Activated naive CD4-positive, alpha-beta T cell treated with anti-CD3 and anti-CD28 coated beads for 36 hours (primary cell): ENCODE measurements at regions of chr7 and their contacts with region 1.

Region 1: GRCh38 chr7:23347682-23348180 is 48.6 kb downstream of the MALSU1 start:
- DNase-seq: peak; percentile 20
- H3K4me3 Mint-ChIP-seq: peak overlapping the region; percentile 8
- H3K27ac Mint-ChIP-seq: peak overlapping the region; percentile 64
- H3K4me1 Mint-ChIP-seq: peaks cover 32% of the 10 kb centered on the region
- H3K27me3 Mint-ChIP-seq: no peaks in the 10 kb centered on the region

Region 2: DNA sequence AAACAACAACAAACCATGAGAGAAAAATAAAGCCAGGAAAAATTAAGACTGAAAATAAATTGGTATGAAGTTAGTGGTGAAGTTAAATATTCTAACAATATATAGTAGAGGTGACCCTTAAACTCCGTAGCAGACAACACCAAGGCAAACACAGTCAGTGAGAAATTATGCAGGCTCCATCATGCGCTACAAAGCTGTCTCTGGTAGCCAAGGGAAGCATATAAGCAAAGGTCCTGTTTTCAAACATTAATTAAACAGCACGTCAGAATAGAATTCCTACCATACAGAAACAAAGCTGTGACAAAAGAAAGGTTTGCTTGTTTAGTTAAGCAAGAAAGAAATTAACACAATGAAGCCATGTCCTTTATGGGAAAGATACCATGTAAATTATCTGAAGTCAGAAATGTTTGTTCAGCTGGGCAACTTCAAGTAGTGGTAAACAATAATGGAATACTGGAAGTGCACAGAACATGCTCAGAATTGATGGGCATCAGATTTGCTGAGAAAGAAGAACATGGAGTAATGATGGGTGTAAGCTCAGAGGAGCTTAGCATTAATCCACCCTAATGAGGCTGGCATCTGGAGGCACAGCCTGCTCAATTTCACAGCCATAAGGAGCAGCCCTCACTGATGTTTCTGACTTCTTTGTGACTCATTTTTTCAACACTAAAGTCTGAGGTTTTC is 46.9 kb after region 1 on chr7:
- CTCF ChIA-PET with region 1: no interaction called
- intact Hi-C with region 1: loop called (anchors 1 kb)
- DNase-seq: no peak
- H3K4me3 Mint-ChIP-seq: no peak overlapping the region
- H3K27ac Mint-ChIP-seq: no peak overlapping the region
- H3K4me1 Mint-ChIP-seq: peaks cover 15% of the 10 kb centered on the region
- H3K27me3 Mint-ChIP-seq: no peaks in the 10 kb centered on the region

Region 3: GRCh38 chr7:23404546-23405239 is 57.0 kb after region 1 on chr7:
- CTCF ChIA-PET with region 1: no interaction called
- intact Hi-C with region 1: loop called (anchors 1 kb)
- DNase-seq: peak; percentile 25
- H3K4me3 Mint-ChIP-seq: no peak overlapping the region
- H3K27ac Mint-ChIP-seq: peak overlapping the region; percentile 81
- H3K4me1 Mint-ChIP-seq: peaks cover 28% of the 10 kb centered on the region
- H3K27me3 Mint-ChIP-seq: no peaks in the 10 kb centered on the region

Region 4: DNA sequence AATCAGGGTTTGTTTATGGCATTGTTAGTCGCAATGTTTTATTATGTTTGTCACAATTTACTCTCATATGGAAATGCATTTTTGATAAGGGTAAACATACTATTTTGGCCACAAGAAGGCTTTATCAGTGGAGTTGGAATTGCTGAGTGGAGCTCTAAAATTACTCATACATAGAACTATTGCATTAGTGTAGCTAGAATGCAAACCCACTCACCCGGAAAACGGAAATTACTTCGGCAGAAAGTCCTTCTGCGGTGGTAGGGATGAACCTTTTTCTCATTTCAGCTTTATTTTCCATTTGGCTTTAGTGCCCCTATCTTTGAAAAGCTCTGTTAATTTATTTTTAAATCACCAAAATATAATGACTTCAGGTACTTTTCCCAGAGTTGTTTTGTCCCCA is 893.5 kb after region 1 on chr7:
- CTCF ChIA-PET with region 1: no interaction called
- intact Hi-C with region 1: no loop called
- DNase-seq: no peak
- H3K4me3 Mint-ChIP-seq: no peak overlapping the region
- H3K27ac Mint-ChIP-seq: no peak overlapping the region
- H3K4me1 Mint-ChIP-seq: no peaks in the 10 kb centered on the region
- H3K27me3 Mint-ChIP-seq: peaks cover 4% of the 10 kb centered on the region